A549 (cell line): ENCODE measurements at regions of chr2 and their contacts with region 1.

Region 1: GRCh38 chr2:241950413-241951315 is 81.1 kb downstream of the RTP5 start:
- DNase-seq: peak; percentile 68 to 77
- ATAC-seq: peak; percentile 86 to 93
- H3K4me3 ChIP-seq: no peak overlapping the region
- H3K27ac ChIP-seq: peak overlapping the region in 1 of 2 experiments; percentile 41; a peak in 1 of 6 replicates
- H3K4me1 ChIP-seq: no peaks in the 10 kb centered on the region
- CTCF ChIP-seq: peak; percentile 89
- EP300 ChIP-seq: no peak
- POLR2A ChIP-seq: no peak
- RAD21 ChIP-seq: peak; percentile 93

Region 2: DNA sequence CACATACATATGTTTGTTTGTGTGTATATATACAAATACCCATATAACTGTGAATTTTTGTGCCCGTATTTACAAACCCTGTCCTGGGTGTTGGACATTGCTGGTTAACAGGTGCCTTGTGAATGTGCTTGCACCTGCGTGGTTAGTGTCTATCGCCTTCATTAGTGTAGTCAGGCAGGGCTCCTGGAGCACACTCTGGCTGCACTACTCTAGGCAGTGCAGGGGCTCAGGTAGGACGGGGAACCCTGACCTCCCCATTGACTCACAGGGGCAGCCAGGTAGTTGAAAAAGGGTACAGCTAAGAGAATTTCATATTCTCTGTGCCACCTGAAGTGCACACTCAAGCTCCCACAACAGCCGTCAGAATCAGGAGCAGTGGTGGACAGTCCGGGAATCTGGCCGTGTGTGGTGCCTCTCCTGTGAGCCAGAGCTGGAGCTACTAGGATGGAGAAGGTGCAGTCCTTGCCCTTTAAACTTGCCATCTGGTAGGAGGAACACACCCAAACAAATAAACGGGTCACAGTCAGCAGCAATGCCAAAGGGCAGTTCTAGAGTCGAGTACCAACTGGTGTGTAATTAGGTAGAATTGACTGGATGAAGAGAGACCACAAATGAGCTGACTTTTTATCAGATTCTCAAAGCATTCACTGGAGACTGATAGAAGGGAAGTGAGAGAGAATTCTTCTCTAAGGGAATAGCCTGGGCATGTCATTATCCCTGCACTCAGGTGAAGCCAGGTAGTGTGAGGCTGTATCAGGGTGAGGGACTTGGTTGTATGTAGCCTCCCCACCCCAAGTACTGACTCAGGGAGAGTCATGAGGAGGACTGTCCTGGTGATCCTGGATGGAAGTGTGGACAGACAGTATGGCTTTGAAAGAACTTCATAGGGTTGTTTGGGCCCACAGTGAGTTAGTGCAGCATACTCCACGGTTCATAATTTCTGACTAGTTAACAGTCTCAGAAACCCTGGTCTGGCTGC is 550.4 kb before region 1 on chr2:
- CTCF ChIA-PET with region 1: no interaction called
- POLR2A ChIA-PET with region 1: no interaction called
- DNase-seq: no peak
- ATAC-seq: peak; percentile 56 to 62; a peak in 3 of 6 replicates
- H3K4me3 ChIP-seq: no peak overlapping the region
- H3K27ac ChIP-seq: no peak overlapping the region
- H3K4me1 ChIP-seq: peaks cover 8% of the 10 kb centered on the region; the same call in 1 of the 3 replicates
- CTCF ChIP-seq: no peak
- EP300 ChIP-seq: no peak
- POLR2A ChIP-seq: no peak
- RAD21 ChIP-seq: no peak

Region 3: DNA sequence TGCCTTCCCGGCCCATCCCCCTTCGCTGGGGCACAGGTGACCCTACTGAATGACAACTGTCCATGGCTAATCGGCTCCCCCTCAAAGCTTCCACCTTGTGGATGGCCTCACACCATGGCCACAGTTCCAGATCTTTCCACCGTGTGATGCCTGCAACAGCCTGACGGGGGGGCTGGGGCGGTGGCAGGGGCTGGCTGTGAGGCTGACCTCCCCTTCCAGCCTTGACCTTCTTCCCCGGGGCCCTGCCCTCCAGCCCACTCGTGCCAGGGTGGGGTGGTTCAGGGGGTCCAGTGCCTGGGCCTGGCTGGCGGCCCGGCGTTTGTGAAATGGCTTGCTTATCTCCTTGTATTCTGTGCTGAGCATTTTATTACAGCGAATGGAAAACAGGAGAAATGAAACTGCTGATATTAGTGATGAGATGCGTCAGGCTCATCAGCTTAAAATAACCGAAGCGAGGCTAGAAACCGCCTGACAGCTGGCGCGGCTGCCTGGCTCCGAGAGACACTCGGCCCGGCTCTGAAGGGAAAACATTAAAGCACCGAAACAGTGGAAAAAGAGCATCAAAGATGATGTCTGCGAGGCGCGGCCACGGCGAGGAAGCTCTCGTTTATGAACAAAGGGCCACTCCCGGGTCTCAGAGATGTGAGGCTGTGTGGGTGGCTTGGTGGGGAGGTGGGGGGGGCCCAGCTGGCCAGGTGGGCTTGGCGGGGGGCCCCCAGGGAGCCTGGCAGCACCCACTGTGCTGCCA is 91.1 kb before region 1 on chr2:
- CTCF ChIA-PET with region 1: no interaction called
- POLR2A ChIA-PET with region 1: no interaction called
- DNase-seq: no peak
- ATAC-seq: peak; percentile 67 to 71
- H3K4me3 ChIP-seq: no peak overlapping the region
- H3K27ac ChIP-seq: no peak overlapping the region
- H3K4me1 ChIP-seq: no peaks in the 10 kb centered on the region
- CTCF ChIP-seq: no peak
- EP300 ChIP-seq: no peak
- POLR2A ChIP-seq: no peak
- RAD21 ChIP-seq: no peak

Region 4: DNA sequence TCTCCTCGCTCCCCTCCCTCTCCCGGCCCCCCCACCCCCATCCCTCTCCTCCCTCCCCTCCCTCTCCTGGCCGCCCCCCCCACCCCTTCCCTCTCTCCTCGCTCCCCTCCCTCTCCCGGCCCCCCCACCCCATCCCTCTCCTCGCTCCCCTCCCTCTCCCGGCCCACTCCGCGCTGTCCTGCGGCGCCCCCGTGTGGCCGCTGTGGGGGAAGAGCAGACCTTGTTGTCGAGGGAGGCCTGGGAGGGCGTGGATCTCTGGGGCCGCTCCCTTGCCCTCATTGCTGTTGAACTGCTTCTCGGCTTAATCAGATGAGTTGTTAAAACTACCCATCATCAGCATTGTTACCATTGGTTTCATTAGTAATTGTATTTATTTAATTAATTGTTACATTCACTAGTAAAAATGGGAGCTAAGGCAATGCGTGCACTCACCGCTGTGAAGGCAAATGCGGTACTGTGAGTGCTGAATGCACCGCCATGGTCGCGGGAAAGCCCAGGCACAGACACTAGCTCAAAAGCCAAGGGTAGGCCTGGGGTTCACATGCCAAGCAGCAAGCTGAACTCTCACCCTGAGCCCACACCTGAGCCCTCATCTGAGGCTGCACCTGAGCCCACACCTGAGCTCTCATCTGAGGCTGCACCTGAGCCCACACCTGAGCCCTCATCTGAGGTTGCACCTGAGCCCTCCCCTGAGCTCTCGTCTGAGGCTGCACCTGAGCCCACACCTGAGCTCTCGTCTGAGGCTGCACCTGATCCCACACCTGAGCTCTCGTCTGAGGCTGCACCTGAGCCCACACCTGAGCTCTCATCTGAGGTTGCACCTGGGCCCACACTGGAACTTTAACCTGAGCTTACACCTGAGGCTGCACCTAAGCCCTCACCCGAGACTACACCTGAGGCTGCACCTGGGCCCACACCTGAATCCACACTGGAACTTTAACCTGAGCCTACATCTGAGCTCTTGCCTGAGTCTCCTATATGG is 72.4 kb before region 1 on chr2:
- CTCF ChIA-PET with region 1: no interaction called
- POLR2A ChIA-PET with region 1: no interaction called
- DNase-seq: peak; percentile 73 to 77
- ATAC-seq: peak; percentile 59 to 65
- H3K4me3 ChIP-seq: no peak overlapping the region
- H3K27ac ChIP-seq: peak overlapping the region in 1 of 2 experiments; percentile 64; a peak in 1 of 6 replicates
- H3K4me1 ChIP-seq: peaks cover 10% of the 10 kb centered on the region; the same call in 2 of the 3 replicates
- CTCF ChIP-seq: peak; percentile 57
- EP300 ChIP-seq: no peak
- POLR2A ChIP-seq: no peak
- RAD21 ChIP-seq: peak; percentile 76 to 78

Region 5: DNA sequence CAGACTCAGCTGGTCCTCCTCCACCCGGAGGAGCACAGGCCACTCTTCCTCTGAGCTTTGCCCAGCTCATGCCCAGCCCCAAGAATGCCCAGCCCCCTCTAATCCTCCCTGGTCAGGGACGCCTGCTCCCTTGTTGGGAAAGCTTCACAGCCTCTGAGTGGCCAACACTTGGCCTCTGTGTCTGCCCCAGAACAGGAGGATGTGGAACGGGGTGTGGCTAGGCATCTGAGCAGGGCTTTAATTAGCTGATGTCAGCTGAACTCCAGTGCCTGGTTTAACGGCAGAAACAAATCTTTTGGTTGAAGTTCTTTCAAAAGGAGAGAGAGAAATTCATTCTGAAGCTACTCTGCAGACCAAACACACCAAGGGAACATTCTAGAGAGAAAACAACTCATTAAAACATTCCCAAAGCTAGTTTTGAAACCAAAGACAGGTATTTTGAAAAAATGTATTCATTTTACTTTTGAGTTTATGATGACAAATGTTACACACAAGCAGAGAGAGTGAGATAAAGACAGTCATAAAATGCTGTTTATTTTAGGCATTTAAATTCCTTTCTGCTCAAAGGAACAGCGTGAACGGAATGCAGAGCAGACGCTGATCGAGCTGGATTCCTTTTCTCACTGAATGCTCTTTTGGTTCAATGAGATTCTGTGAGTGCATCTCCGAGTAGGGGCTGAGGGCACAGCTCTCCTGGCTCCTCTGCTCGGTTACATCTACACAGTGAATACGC is 17.3 kb before region 1 on chr2:
- CTCF ChIA-PET with region 1: interaction called, 16 read pairs
- POLR2A ChIA-PET with region 1: no interaction called
- DNase-seq: no peak
- ATAC-seq: peak in 1 of 2 experiments; percentile 17; a peak in 2 of 6 replicates
- H3K4me3 ChIP-seq: no peak overlapping the region
- H3K27ac ChIP-seq: no peak overlapping the region
- H3K4me1 ChIP-seq: no peaks in the 10 kb centered on the region
- CTCF ChIP-seq: no peak
- EP300 ChIP-seq: no peak
- POLR2A ChIP-seq: no peak
- RAD21 ChIP-seq: no peak

Region 6: DNA sequence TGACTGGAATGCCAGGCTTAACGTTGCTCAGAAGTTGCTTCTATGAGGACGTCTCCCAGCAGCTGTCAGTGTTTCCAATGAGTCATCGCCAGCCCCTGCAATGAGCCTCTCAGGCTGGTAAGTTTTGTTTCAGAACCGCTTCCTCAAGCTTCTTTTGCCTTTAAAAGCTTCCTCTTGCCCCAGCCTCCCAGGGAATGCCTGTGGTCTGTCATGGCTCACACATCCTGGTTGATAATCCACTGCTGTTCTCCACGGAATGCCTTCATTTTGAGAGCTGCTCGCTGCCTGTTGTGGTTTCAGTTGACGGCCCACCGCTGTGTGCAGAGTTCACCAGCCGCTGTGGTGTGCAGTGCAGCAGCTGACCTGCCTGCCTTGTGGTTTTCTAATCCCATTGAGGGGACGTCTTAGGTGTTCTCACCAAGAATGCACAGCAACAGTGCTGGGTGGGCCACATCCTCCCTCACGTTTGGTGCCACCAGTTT is 15.3 kb after region 1 on chr2:
- CTCF ChIA-PET with region 1: interaction called, 24 read pairs
- POLR2A ChIA-PET with region 1: no interaction called
- DNase-seq: no peak
- ATAC-seq: no peak
- H3K4me3 ChIP-seq: no peak overlapping the region
- H3K27ac ChIP-seq: no peak overlapping the region
- H3K4me1 ChIP-seq: no peaks in the 10 kb centered on the region
- CTCF ChIP-seq: no peak
- EP300 ChIP-seq: no peak
- POLR2A ChIP-seq: no peak
- RAD21 ChIP-seq: no peak

Region 7: GRCh38 chr2:241977557-241978300 is 27.1 kb after region 1 on chr2:
- CTCF ChIA-PET with region 1: interaction called, 15 read pairs
- POLR2A ChIA-PET with region 1: no interaction called
- DNase-seq: no peak
- ATAC-seq: no peak
- H3K4me3 ChIP-seq: no peak overlapping the region
- H3K27ac ChIP-seq: no peak overlapping the region
- H3K4me1 ChIP-seq: no peaks in the 10 kb centered on the region
- CTCF ChIP-seq: no peak
- EP300 ChIP-seq: no peak
- POLR2A ChIP-seq: no peak
- RAD21 ChIP-seq: no peak

Region 8: DNA sequence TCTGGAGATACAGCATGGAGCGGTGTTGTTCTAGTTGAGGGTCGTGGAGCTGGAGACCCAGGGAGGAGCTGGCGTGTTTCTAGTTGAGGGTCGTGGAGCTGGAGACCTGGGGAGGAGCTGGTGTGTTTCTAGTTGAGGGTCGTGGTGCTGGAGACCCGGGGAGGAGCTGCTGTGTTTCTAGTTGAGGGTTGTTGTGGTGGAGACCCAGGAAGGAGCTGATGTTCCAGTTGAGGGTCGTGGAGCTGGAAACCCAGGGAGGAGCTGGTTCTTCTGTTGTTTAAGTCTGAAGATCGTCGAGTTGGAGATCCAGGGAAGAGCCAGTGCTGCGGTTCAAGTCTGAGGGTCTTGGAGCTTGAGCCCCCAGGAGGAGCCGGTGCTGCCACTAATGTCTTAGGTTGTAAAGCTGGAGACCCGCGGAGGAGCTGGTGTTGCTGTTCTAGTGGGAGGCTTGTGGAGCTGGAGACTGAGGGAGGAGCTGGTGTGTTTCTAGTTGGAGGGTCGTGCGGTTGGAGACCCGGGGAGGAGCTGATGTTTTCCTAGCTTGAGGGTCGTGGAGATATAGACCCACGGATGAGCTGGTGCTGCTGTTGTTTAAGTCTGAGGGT is 74.2 kb after region 1 on chr2:
- CTCF ChIA-PET with region 1: interaction called, 15 read pairs
- POLR2A ChIA-PET with region 1: no interaction called
- DNase-seq: no peak
- ATAC-seq: no peak
- H3K4me3 ChIP-seq: no peak overlapping the region
- H3K27ac ChIP-seq: no peak overlapping the region
- H3K4me1 ChIP-seq: no peaks in the 10 kb centered on the region
- CTCF ChIP-seq: no peak
- EP300 ChIP-seq: no peak
- POLR2A ChIP-seq: no peak
- RAD21 ChIP-seq: no peak